HEK293 (cell line): ENCODE measurements at regions of chr10 and their contacts with region 1.

Region 1: GRCh38 chr10:79487296-79488194 is 24.8 kb upstream of the EIF5AL1 start:
- H3K4me3 ChIP-seq: no peak overlapping the region
- H3K27ac ChIP-seq: no peak overlapping the region
- H3K4me1 ChIP-seq: no peaks in the 10 kb centered on the region
- CTCF ChIP-seq: 0 out of 2 replicates have a peak, but pooled peaks have one; percentile 21

Region 2: DNA sequence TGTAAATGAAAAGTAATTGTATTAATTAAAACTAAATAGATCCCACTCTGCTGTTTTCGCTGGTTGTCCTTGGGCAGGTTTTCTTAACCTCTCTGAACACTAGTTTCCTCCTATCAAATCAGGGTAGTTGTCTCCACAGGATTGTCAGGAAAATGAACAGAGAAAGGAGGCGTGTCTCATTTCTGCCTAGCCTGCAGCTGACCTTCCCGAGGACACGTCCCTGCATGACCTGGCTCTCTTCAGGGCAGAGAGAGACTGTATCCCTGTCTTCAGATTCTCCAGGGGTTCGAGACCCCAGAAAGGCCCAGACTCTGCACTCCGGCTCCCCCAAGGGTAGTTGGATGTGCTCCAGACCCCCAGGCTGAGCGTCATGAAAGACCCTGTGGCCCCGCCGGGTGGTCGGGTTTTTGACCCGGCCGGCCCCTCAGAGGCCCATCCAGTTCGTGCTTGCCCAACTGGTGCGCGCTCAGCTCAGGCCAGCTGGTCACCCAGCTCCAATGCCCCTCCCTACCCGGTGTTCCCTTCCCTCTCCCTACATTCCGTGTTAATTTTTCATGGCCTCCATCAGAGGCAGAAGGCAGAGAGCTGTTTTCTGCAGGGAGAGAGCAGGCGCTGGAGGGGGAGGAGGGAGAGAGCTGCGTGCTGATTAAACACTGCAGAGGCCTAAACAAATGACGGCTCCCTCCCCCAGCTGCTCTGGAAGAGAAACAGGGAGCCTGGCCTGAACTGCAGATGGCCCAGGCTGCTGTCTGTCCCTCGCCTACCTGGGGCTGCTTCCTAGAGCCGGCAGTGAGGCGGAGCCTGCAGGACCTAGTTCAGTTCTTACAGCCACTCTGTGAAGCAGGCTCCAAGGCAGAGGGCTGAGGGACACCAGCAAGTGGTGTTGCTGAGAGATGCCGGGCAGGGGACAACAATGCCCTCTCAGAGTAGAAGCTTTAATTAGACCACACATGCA is 226.5 kb before region 1 on chr10:
- CTCF ChIA-PET with region 1: no interaction called
- POLR2A ChIA-PET with region 1: no interaction called
- H3K4me3 ChIP-seq: no peak overlapping the region
- H3K27ac ChIP-seq: no peak overlapping the region
- H3K4me1 ChIP-seq: peaks cover 4% of the 10 kb centered on the region; the same call in 1 of the 2 replicates
- CTCF ChIP-seq: no peak

Region 3: DNA sequence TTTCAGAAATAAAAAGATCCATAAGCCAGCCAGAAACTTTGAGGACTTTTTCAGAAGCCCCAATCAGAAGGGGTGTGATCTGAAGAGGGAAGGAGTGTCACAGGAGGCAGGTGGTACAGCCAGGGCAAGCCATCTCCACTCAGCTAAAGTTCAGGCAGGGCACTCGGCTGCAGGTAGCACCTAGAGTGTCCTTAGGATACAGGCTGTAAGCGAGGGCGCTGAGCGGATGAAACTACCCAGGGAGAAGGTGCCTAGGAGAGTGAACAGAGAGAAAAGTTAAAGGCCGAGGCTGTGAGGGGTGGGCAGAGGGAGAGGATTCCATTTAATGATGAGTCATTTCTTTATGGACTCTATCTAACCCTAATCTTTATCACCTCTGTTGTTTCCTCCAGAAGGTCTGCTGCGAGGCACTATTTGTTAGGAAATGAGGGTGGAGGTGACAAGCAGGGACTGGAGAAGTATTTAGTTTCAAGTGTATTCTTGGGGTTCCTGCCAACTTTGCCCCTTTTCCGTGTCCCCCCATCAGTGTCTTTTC is 12.4 kb before region 1 on chr10:
- CTCF ChIA-PET with region 1: interaction called, 11 read pairs
- POLR2A ChIA-PET with region 1: no interaction called
- H3K4me3 ChIP-seq: no peak overlapping the region
- H3K27ac ChIP-seq: no peak overlapping the region
- H3K4me1 ChIP-seq: no peaks in the 10 kb centered on the region
- CTCF ChIP-seq: no peak